IMR-90 (cell line): ENCODE measurements at regions of chr2 and their contacts with region 1.

Region 1: DNA sequence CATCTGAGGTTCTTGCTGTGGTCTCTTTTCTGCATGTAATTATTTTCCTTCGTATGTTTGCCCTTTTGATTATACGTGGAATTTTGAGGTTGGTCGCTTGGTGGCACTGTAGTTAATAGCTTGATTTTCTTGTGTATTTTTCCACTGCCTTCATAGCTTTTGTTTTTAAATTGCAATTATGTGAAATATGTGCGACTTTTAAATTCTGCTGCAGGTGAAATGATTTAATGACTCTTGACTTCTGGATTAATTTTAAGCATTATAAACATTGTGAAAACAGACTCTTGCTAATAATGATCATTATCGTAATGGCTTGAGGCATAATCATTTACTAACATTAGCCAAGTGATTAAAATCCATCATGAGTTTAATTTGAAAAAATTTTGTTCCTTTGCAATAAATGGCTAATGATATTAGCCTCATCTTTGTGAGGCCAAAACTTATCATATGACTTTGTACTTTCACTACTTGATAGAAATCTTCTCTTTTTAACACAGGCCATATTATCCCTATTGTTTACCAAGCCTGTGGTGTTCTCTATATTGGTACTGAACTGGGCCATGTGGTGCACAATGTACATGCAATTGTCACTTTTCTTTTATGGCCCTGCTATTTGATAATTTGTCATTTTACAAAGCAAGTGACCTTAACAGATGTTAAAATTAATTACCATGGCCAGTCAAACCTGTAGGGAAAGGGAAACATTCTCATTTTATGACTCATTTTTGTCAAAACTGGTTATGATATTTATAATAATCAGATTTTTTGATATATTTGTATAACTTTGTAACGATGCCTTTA is 62.8 kb upstream of the NEUROD1 start:
- DNase-seq: peak; percentile 73
- ATAC-seq: peak; percentile 77
- H3K4me3 ChIP-seq: no peak overlapping the region
- H3K27ac ChIP-seq: no peak overlapping the region
- H3K4me1 ChIP-seq: no peaks in the 10 kb centered on the region; the same call in 1 of the 2 replicates
- H3K27me3 ChIP-seq: no peaks in the 10 kb centered on the region
- CTCF ChIP-seq: peak; percentile 77
- POLR2A ChIP-seq: no peak
- RAD21 ChIP-seq: peak; percentile 80

Region 2: DNA sequence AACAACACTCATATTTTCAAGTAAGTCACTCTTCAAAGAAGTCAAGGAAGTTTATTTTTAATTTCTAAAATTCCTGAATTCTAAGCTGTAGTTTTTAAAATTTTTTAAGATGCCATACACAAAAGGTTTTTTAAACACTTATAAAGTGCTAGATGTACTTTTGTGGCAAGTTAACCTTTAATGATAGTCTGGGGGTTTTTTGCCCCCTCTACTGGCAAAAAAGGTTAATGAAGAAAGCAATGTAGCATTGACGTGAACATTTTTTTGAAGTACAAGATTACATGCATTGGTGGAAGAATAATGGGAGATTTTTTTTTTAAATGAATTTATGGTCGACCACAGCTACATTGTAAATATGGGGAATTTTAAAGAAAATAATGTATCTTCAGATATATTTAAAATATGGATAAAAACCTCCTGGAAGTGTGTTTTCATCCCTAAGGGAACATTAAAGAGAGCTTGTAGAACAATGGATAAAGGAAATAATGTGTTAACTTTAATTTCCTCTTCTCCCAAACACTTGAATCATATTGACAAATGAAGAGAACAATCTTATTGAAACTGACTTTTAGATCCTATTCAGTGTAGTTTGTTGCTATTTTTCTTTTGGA is 161.0 kb after region 1 on chr2:
- CTCF ChIA-PET with region 1: interaction called, 5 read pairs
- POLR2A ChIA-PET with region 1: no interaction called
- dilution Hi-C with region 1: no loop called
- in situ Hi-C with region 1: loop called (anchors 5 kb)
- intact Hi-C with region 1: loop called (anchors 1 kb)
- DNase-seq: peak; percentile 50
- ATAC-seq: no peak
- H3K4me3 ChIP-seq: no peak overlapping the region
- H3K27ac ChIP-seq: no peak overlapping the region
- H3K4me1 ChIP-seq: peaks cover 3% of the 10 kb centered on the region; the same call in 1 of the 2 replicates
- H3K27me3 ChIP-seq: no peaks in the 10 kb centered on the region
- CTCF ChIP-seq: peak; percentile 64
- POLR2A ChIP-seq: no peak
- RAD21 ChIP-seq: peak; percentile 69